Ovary (tissue), 10 donors: ENCODE measurements at regions of chr7 and their contacts with region 1.

Region 1: GRCh38 chr7:137909037-137909436 is 62.3 kb upstream of the DGKI start:
- DNase-seq: peak; percentile 30 to 61 (median 58)
- H3K4me3 ChIP-seq: no peak overlapping the region
- H3K27ac ChIP-seq: peak overlapping the region in 1 of 2 donors; percentile 1
- H3K4me1 ChIP-seq: peaks cover 2% of the 10 kb centered on the region
- H3K27me3 ChIP-seq: no peaks in the 10 kb centered on the region
- CTCF ChIP-seq: no peak
- EP300 ChIP-seq: no peak
- POLR2A ChIP-seq: no peak

Region 2: DNA sequence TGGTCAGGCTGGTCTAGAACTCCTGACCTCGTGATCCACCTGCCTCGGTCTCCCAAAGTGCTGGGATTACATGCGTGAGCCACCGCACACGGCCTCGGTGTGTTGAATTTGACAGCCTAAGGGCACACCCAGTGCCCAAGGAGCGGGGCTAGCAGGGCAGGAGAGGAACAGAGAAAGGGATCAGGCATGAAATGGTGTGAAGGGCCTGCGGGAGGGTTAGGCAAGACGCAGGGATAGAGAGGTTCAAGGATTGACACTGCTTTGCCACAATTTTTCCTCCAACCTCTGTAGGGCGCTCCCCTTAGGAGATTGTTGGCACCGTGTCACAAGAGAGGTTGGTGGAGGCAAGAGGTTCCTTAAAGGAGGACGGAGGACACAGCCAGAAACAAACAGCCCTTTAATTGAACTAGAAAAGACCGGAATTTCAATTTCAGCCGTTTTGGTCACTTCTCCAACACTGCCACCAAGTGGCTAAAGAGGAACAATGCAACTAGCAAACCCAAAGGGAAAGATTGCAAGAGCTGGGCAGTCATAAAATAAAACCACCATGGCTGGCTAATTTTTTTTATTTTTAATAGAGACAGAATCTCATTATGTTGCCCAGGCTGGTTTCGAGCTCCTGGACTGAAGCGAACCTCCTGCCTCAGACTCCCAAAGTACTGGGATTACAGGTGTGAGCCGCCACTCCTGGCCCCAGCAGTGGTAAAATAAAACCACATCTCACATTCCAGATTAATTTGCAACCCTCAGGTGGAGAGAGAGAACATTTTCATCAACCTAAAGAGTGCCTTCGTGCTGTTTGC is 99.7 kb after region 1 on chr7:
- intact Hi-C with region 1: loop called in 3 of 4 experiments (anchors 2 to 5 kb)
- DNase-seq: peak in 1 of 5 donors; percentile 56
- H3K4me3 ChIP-seq: no peak overlapping the region
- H3K27ac ChIP-seq: no peak overlapping the region
- H3K4me1 ChIP-seq: no peaks in the 10 kb centered on the region
- H3K27me3 ChIP-seq: no peaks in the 10 kb centered on the region
- CTCF ChIP-seq: peak; percentile 68 to 87 (median 85)
- EP300 ChIP-seq: no peak
- POLR2A ChIP-seq: no peak